ENCODE measurements at regions of chr10 and their contacts with region 1.

Region 1: DNA sequence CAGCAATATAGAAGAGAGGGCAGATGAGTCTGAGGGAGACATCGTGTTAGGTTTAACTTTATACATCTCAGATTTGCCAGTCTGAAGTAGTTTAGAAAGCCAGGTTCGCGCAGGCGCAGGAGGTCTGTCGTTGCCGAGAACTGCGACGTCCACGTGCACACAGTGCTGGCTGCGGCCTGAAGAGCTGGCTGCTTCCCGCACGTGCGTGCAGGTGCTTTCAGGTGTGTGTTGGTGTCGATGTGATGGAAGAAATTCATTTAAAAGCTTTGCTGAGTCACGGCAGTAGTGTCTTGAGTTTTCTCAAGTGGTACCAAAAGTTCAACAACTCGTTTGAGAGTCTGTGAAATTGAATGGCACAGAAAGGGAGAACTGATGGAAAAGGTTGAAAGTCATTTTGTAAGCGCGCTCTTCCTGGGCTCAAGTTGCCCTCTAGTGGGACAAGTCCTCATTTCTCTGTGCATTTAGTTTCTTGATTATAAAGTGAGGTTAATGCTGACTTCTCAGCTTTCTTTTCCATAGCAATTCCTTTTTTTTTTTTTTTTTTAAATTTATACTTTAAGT is 18.6 kb downstream of the WDR37 start:
- DNase-seq: no peak
- H3K4me3 ChIP-seq: no peak overlapping the region
- H3K27ac ChIP-seq: no peak overlapping the region
- H3K4me1 ChIP-seq: peaks cover 4 to 21% (median 9%) of the 10 kb centered on the region in 4 donors
- H3K27me3 ChIP-seq: no peaks in the 10 kb centered on the region
- CTCF ChIP-seq: peak in 3 of 5 experiments; percentile 27 to 30 (median 28)
- EP300 ChIP-seq: no peak
- POLR2A ChIP-seq: no peak

Region 2: DNA sequence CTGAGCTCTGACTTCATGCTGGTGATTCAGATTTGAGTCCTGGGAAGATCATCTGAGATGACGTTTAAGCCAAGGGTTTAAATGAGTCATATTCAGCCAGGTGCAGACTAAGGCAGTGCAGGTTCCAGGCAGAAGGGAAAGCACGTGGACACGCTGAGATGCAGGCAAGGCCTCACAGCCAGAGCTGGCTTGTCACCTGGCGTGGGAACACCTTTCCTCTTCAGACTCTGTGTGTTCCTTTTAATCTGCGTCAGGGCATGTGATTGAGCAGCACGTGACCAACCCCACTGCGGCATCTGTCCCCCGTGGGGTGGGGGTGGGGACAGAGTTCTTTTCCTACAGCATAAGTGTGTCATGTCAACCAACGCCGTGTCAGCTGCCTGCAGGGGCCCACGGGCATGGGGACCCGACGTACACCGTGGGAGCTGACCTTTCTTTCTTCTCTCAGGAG is 38.5 kb before region 1 on chr10:
- in situ Hi-C with region 1: no loop called
- intact Hi-C with region 1: no loop called
- DNase-seq: no peak
- H3K4me3 ChIP-seq: no peak overlapping the region
- H3K27ac ChIP-seq: no peak overlapping the region
- H3K4me1 ChIP-seq: no peaks in the 10 kb centered on the region
- H3K27me3 ChIP-seq: no peaks in the 10 kb centered on the region
- CTCF ChIP-seq: no peak
- EP300 ChIP-seq: no peak
- POLR2A ChIP-seq: no peak

Region 3: GRCh38 chr10:1094112-1095057 is 19.6 kb after region 1 on chr10:
- in situ Hi-C with region 1: no loop called
- intact Hi-C with region 1: loop called (anchors 1 kb)
- DNase-seq: no peak
- H3K4me3 ChIP-seq: no peak overlapping the region
- H3K27ac ChIP-seq: no peak overlapping the region
- H3K4me1 ChIP-seq: no peaks in the 10 kb centered on the region
- H3K27me3 ChIP-seq: no peaks in the 10 kb centered on the region
- CTCF ChIP-seq: no peak
- EP300 ChIP-seq: no peak
- POLR2A ChIP-seq: no peak